ENCODE measurements at regions of chr17 and their contacts with region 1.

Region 1: GRCh38 chr17:57875309-57876115 is 25.7 kb upstream of the MRPS23 start:
- DNase-seq: peak; percentile 88 to 92
- H3K4me3 ChIP-seq: no peak overlapping the region
- H3K27ac ChIP-seq: no peak overlapping the region
- H3K4me1 ChIP-seq: peaks cover 55% of the 10 kb centered on the region
- H3K27me3 ChIP-seq: no peaks in the 10 kb centered on the region
- CTCF ChIP-seq: peak; percentile 77

Region 2: DNA sequence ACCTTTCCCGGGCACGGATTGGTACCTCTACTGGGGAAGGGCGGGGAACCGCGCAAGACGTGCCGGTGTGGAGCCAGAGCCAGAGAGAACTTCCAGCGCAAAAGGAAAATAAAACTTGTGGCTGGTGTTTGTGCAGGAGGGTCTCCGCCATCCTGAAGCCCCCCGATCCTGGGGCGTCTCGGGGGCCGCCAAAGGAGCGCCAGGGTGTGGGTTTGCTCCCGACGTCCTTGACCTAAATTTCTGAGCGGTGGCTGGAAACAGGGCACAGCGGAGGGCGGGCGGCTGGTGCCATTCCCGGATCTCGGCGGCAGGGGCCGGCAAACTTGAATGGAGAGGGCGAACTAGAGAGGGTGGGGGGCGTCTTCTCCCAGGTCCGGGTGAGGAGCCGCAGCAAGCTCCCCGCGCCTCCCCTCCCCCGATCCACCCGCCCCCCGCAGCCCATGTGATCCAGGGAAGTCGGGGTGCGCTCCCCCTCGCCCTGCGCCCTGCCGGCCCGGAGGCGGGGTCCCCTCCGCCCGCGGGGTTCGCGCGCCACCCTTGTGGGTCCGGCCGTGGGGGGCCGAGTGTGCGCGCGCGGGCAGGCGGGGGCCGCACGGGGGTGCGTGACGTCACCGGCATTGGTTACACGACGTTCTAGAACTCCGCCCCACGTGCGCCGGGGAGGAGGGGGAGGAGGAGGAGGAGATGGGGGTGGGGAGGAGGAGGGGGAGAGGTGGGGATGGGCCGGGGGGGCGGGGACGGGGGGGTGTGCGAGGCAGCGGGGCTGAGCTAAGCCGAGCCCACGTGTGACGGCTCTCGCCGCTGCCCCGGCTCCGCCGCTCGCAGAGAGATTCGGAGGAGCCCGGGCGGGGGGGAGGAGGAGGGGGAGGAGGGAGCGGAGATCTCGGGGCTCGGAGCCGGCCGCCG is 619.5 kb before region 1 on chr17 and contains the start of gene MSI2:
- CTCF ChIA-PET with region 1: no interaction called
- POLR2A ChIA-PET with region 1: no interaction called
- intact Hi-C with region 1: no loop called
- DNase-seq: peak; percentile 39 to 61
- H3K4me3 ChIP-seq: peak within 1 kb of the TSS; percentile 66
- H3K27ac ChIP-seq: no peak within 1 kb of the TSS
- H3K4me1 ChIP-seq: peaks cover 3% of the 10 kb centered on the region; the same call in 1 of the 2 replicates
- H3K27me3 ChIP-seq: peaks cover 30% of the 10 kb centered on the region
- CTCF ChIP-seq: no peak
- total RNA-seq, gene MSI2: 11.8 and 15.7 TPM in 2 replicates

Region 3: DNA sequence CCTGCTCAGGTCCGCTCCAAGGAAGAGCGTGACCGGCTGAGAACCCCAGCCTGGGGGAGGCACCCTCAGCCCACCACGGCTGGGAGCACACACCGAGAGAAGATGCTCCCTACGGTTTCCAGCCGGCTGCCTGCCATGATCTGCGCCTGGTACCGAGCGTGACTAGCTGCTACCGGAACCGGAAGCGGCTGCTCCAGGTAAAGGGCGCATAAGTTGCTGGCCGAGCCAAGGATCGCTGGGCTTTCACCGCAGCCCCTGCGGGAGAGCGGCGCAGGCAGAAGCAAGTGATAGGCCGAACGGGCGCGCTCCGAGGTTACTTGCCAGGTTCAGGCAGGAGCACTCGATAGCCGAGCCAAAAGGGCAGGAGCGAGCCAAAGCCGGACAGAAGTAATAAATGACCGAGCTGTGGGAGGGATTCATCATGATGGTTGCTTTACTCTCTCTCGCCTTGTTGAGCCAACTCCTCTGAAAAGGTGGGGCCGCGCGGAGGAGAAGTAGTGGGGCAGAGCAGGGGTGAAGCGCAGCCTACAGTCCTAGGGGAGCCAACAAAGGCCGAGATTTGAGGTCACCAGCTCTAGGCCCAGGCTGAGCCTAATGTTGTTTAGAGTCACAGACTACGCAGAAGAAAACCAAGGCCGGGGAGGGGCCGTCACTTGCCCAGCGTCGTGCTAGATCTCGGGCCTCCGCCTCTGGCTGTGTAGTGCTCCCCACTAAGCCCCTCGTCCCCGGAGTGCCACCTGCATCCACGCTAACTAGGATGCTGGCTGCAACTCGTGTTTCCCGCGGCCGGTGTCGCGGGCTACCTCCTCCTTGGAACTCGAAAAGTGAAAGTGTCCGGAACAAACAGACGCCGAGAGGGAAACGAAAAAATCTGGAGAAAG is 25.4 kb before region 1 on chr17 and contains the start of gene MRPS23:
- CTCF ChIA-PET with region 1: no interaction called
- POLR2A ChIA-PET with region 1: no interaction called
- intact Hi-C with region 1: loop called (anchors 1 kb)
- DNase-seq: peak; percentile 95 to 98
- H3K4me3 ChIP-seq: peak within 1 kb of the TSS; percentile 72
- H3K27ac ChIP-seq: peak within 1 kb of the TSS; percentile 56
- H3K4me1 ChIP-seq: peaks cover 24% of the 10 kb centered on the region
- H3K27me3 ChIP-seq: no peaks in the 10 kb centered on the region
- CTCF ChIP-seq: no peak
- total RNA-seq, gene MRPS23: 49.7 and 50.3 TPM in 2 replicates

Region 4: DNA sequence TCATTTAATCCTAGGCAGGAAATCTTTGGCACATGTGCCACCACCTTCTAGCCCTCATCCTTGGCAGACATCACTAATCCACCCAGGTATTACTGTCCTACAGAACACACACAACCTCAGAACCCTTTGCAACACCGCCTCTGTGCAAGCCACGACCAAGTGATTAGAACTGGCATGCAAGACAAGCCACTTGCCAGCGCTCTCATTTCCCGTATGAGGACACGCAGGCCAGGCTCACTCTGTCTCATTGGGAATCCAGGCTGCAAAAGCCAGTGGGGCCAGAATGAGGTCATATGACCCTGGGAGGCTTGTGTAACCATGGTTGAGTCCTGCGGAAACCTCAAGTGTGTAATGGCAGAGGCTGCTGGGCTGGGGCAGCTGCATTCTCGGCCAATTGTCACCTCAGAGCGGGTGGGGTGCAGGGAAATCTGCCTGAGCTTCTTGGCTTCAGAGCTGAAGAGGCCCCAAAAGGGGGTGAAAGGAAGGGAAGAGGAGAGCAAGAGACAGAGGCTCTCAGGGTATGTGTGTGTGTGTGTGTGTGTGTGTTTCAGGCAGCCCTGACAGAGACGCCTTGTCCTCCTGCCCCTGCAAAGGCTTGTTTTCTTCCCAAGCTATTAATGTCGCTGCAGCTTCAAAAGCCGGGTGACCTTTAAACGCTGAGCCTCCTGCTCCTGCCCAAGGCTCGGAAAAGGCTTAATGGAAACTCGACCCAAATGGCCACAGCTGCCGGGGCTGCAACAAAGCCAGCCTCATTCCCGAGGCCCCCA is 17.5 kb after region 1 on chr17:
- CTCF ChIA-PET with region 1: interaction called, 7 read pairs
- POLR2A ChIA-PET with region 1: interaction called, 4 read pairs
- intact Hi-C with region 1: loop called (anchors 1 kb)
- DNase-seq: peak; percentile 92 to 99
- H3K4me3 ChIP-seq: peak overlapping the region; percentile 41; the same call in 1 of the 2 replicates
- H3K27ac ChIP-seq: peak overlapping the region; percentile 90
- H3K4me1 ChIP-seq: peaks cover 38% of the 10 kb centered on the region
- H3K27me3 ChIP-seq: no peaks in the 10 kb centered on the region
- CTCF ChIP-seq: peak; percentile 58; the same call in 1 of the 2 replicates

Measured in PC-9 (cell line).